Activated B cell treated with CpG ODN at 0.5 μM for 24 hours (primary cell): ENCODE measurements at regions of chr14 and their contacts with region 1.

Region 1: GRCh38 chr14:89430391-89431236 is 13.6 kb upstream of the FOXN3 start:
- DNase-seq: no peak
- ATAC-seq: peak; percentile 93
- H3K4me3 Mint-ChIP-seq: peak overlapping the region; percentile 80
- H3K27ac Mint-ChIP-seq: peak overlapping the region; percentile 86
- H3K4me1 Mint-ChIP-seq: peaks cover 83% of the 10 kb centered on the region
- H3K27me3 Mint-ChIP-seq: no peaks in the 10 kb centered on the region
- CTCF ChIP-seq: no peak

Region 2: DNA sequence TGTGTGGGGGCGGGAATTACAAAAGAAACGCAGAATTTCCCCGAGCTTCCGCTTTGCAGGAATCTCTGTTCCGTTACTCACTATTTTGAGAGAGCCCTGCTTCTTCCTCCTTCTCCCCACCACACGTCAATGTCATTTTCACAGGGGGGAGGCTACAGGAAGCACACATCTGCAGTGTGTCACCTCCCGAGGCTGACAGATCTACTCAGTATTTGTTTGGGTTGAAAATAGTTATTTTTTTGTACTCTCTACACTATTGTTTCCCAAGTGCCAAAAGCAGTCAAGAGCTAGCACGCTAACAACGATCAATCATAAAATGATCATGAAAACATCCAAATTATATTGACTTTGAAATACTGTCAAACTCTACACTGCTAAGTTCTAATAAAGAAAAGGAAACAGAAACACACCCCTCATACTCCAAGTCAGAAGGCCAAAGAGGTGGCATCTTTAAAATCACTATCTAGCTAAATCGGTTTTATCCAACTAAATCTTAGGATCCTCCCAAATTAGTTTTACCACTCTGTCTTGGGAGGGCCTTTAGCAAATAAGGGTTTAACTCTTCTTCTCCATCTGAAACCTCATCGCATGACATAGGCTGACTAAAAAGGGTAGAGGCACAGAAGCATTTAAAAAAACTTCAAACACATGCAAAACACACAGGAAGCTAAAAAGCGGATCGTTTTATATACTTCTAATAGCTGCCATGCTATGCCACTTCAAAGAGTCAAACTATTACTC is 65.4 kb before region 1 on chr14:
- CTCF ChIA-PET with region 1: no interaction called
- POLR2A ChIA-PET with region 1: interaction called, 6 read pairs
- intact Hi-C with region 1: loop called (anchors 1 kb)
- DNase-seq: peak; percentile 43
- ATAC-seq: peak; percentile 93
- H3K4me3 Mint-ChIP-seq: peak overlapping the region; percentile 80
- H3K27ac Mint-ChIP-seq: peak overlapping the region; percentile 94
- H3K4me1 Mint-ChIP-seq: peaks cover 67% of the 10 kb centered on the region
- H3K27me3 Mint-ChIP-seq: no peaks in the 10 kb centered on the region
- CTCF ChIP-seq: no peak

Region 3: GRCh38 chr14:89466484-89466883 is 35.9 kb after region 1 on chr14:
- CTCF ChIA-PET with region 1: no interaction called
- POLR2A ChIA-PET with region 1: interaction called, 5 read pairs
- intact Hi-C with region 1: loop called (anchors 1 kb)
- DNase-seq: no peak
- ATAC-seq: peak; percentile 57
- H3K4me3 Mint-ChIP-seq: no peak overlapping the region
- H3K27ac Mint-ChIP-seq: peak overlapping the region; percentile 50
- H3K4me1 Mint-ChIP-seq: peaks cover 42% of the 10 kb centered on the region
- H3K27me3 Mint-ChIP-seq: no peaks in the 10 kb centered on the region
- CTCF ChIP-seq: no peak

Region 4: DNA sequence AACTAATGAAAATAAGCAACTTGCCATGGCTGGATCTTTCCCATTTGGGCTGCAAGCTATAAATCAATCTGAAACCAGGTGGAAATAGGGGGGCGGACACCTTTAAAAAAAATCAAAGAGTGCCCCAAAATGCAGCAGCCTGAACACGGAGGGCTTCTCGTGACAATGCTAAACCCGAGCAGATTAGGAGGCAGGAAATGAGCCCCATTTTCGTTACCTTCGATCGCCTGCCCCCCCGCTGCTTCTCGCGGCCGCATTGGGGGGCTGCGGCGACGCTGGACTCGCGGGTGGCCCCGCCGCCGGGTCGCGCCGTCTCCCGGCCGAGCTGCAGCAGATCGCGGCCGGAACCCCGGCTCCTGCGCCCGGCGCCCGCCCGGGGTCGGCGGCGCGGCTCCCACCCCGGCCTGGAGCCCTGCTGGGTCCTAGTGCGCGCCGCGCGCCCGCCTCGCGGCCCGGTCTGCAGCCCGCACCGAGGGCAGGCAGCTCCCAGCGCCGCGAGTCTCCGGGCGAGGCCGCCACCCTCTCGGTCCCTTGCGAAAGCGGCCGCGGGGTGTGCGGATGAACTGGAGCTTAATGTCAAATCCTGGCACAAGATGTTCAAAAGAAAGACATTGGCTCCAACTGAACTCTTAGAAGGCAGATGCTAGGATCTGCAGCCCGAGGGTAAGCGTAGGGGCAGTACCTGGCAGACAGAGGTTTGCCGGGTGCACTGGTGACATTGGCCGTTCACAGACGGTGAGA is 188.4 kb after region 1 on chr14:
- CTCF ChIA-PET with region 1: no interaction called
- POLR2A ChIA-PET with region 1: interaction called, 4 read pairs
- intact Hi-C with region 1: loop called (anchors 1 kb)
- DNase-seq: peak; percentile 69
- ATAC-seq: peak; percentile 73
- H3K4me3 Mint-ChIP-seq: peak overlapping the region; percentile 90
- H3K27ac Mint-ChIP-seq: peak overlapping the region; percentile 86
- H3K4me1 Mint-ChIP-seq: peaks cover 68% of the 10 kb centered on the region
- H3K27me3 Mint-ChIP-seq: no peaks in the 10 kb centered on the region
- CTCF ChIP-seq: no peak

Region 5: DNA sequence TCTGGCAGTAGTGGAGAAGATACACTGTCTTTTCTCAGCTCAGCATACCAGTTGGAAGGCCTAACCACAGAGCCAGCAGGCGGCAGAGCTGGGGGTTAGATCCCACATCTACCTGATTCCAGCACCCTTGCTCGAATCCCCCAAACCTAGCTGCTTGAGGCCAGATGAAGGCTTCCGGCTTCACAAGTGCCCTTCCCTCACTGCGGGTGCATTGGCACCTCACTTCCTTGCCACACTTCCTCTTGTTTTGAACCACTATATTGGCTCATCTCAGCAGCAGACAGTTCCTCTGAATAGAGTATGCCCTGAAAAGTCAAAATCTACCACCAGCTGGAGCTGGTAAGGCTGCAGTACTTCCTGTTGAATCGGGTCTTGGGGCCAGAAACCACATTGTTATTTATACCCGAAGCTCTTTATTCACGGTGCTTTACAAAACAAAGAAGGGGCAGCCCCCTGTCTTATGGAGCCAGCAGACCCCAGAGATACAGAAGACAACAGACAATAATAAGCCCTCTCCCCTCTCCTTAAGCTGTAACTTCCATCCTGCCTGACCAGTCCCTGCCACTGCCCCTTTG is 290.2 kb after region 1 on chr14:
- CTCF ChIA-PET with region 1: no interaction called
- POLR2A ChIA-PET with region 1: interaction called, 9 read pairs
- intact Hi-C with region 1: loop called (anchors 1 kb)
- DNase-seq: peak; percentile 45
- ATAC-seq: peak; percentile 90
- H3K4me3 Mint-ChIP-seq: peak overlapping the region; percentile 69
- H3K27ac Mint-ChIP-seq: peak overlapping the region; percentile 95
- H3K4me1 Mint-ChIP-seq: peaks cover 66% of the 10 kb centered on the region
- H3K27me3 Mint-ChIP-seq: no peaks in the 10 kb centered on the region
- CTCF ChIP-seq: no peak